ENCODE measurements at regions of chr6 and their contacts with region 1.

Region 1: DNA sequence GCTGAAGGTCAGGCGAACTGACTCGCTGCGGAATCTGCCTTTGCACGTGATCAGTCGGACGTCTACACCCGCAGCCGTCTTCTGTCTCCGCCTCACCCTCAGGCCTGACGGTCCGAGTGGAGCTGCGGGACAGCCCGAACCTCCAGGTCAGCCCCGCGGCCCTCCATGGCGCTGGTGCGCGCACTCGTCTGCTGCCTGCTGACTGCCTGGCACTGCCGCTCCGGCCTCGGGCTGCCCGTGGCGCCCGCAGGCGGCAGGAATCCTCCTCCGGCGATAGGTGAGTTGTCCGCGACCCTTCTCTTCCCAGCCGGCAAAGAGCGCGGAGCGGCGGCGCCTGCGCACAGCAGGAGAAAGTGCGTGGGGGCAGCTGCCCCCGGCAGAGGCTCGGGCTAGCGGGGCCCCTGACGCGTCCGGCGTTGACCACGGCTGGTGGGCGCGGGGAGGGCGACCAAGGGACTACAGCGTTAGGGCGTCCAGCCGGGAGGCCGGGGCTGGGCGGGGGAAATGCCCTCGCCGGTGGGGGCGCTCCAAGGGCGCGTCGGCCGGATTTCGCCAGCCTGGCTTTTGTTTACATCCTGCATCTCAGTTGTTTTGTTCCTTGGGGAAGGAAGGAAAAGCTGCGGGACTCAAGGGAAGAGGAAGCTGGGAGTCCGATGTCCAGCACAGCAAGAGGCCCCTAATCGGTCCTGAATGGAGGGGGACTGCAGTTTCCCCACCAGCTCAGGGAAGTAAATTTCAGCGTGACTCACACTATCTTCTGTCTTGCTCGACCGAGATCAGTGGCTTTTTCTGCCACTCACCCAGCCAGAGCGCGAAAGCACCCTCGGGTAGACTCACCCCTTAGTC is at the start of gene SMPDL3A:
- DNase-seq: peak; percentile 66
- H3K4me3 Mint-ChIP-seq: peak within 1 kb of the TSS; percentile 87
- H3K27ac Mint-ChIP-seq: peak within 1 kb of the TSS; percentile 80
- H3K4me1 Mint-ChIP-seq: peaks cover 15% of the 10 kb centered on the region
- H3K27me3 Mint-ChIP-seq: no peaks in the 10 kb centered on the region
- CTCF ChIP-seq: peak; percentile 35
- total RNA-seq, gene SMPDL3A: 3.5 and 4.7 TPM in 2 replicates

Region 2: DNA sequence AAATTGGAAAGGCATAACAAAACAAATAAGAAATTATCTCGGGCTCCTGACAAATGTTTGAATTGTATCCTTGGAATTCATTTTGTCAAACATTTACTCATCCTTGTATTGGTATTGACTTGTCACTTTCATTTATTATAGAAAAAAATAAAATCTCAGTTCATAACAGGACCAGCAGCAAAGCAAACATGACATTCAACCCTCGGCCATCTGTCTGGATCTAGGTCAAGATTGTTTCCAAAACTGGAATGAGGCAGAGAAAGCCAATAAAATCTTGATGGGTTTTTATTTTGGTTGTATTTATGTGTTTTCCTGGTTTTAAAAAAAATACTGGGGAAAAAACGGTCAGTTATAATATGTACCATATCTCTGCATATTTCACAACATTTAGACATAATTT is 52.8 kb before region 1 on chr6:
- CTCF ChIA-PET with region 1: interaction called, 37 read pairs
- POLR2A ChIA-PET with region 1: interaction called, 55 read pairs
- intact Hi-C with region 1: loop called (anchors 2 kb)
- DNase-seq: no peak
- H3K4me3 Mint-ChIP-seq: no peak overlapping the region
- H3K27ac Mint-ChIP-seq: peak overlapping the region; percentile 60
- H3K4me1 Mint-ChIP-seq: peaks cover 16% of the 10 kb centered on the region
- H3K27me3 Mint-ChIP-seq: no peaks in the 10 kb centered on the region
- CTCF ChIP-seq: no peak

Region 3: GRCh38 chr6:122770835-122771601 is 18.4 kb before region 1 on chr6:
- CTCF ChIA-PET with region 1: interaction called, 11 read pairs
- POLR2A ChIA-PET with region 1: interaction called, 19 read pairs
- intact Hi-C with region 1: no loop called
- DNase-seq: peak; percentile 44
- H3K4me3 Mint-ChIP-seq: no peak overlapping the region
- H3K27ac Mint-ChIP-seq: no peak overlapping the region
- H3K4me1 Mint-ChIP-seq: peaks cover 6% of the 10 kb centered on the region
- H3K27me3 Mint-ChIP-seq: no peaks in the 10 kb centered on the region
- CTCF ChIP-seq: peak; percentile 11

Region 4: GRCh38 chr6:122778985-122779661 is 10.3 kb before region 1 on chr6:
- CTCF ChIA-PET with region 1: interaction called, 11 read pairs
- POLR2A ChIA-PET with region 1: interaction called, 12 read pairs
- intact Hi-C with region 1: no loop called
- DNase-seq: no peak
- H3K4me3 Mint-ChIP-seq: no peak overlapping the region
- H3K27ac Mint-ChIP-seq: no peak overlapping the region
- H3K4me1 Mint-ChIP-seq: no peaks in the 10 kb centered on the region
- H3K27me3 Mint-ChIP-seq: no peaks in the 10 kb centered on the region
- CTCF ChIP-seq: no peak

Measured in MCF 10A (cell line).